ENCODE measurements at regions of chr11 and their contacts with region 1.

Region 1: GRCh38 chr11:20387241-20388095 is at the start of gene PRMT3:
- DNase-seq: peak; percentile 95
- H3K4me3 ChIP-seq: peak within 1 kb of the TSS; percentile 80 to 99 (median 95)
- H3K27ac ChIP-seq: peak within 1 kb of the TSS; percentile 89
- H3K4me1 ChIP-seq: peaks cover 11% of the 10 kb centered on the region
- H3K27me3 ChIP-seq: no peaks in the 10 kb centered on the region
- CTCF ChIP-seq: peak in 1 of 2 donors; percentile 99
- total RNA-seq, gene PRMT3: 23.3 to 26.3 TPM

Region 2: DNA sequence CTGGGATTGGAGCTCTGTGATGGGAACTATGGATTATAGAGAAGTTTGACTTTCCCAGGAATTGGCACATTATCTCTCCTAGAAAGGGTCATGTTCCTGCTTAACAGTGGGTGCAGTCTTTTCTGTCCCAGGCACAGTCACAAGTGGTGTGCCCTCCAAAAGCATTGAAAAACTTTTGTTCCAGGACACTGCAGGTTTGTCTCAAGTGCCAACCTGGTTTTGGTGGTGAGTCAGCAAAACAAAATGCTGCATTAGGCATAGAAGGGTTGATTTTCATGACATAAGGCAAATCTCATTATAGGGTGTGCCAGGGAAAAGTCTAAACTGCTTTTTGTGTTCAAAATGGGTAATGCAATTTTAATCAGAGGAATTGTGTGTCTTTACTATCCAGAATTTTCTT is 19.0 kb before region 1 on chr11:
- CTCF ChIA-PET with region 1: no interaction called
- dilution Hi-C with region 1: no loop called
- in situ Hi-C with region 1: no loop called
- intact Hi-C with region 1: loop called (anchors 1 kb)
- DNase-seq: peak; percentile 83
- H3K4me3 ChIP-seq: no peak overlapping the region
- H3K27ac ChIP-seq: peak overlapping the region; percentile 92
- H3K4me1 ChIP-seq: peaks cover 35% of the 10 kb centered on the region
- H3K27me3 ChIP-seq: no peaks in the 10 kb centered on the region
- CTCF ChIP-seq: no peak

Region 3: DNA sequence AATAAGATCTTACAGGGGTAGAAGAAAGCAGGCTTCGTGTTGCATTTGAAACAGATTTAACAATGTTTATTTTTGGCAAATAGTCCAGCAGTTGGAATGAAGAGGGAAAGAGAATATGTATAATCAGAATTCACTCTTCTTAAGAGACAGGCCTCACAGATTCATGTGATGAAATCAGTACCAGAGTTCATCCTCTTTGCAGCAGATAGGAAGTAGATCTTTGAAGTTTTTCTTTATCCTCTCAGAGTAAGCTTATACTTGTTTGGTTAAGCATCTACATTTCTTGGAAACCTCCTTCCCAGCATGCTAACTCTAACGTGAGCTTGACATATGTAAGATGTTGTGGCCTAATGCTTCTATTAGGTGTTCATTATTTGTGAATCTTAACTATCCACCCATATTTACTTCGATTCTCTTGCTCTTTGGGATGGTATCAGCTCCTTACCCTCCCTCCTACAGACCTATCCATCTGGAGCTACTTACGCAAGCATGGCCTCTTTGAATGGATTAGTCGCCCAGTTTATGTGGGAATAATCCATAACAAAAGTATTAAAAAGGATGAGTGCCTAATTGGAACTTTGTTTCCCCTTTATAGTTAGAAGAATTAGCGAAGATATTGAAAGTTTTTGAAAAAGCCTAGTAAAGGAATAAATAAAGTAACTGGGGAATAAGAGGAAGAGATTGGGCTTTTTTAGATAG is 80.2 kb after region 1 on chr11:
- CTCF ChIA-PET with region 1: no interaction called
- dilution Hi-C with region 1: no loop called
- in situ Hi-C with region 1: no loop called
- intact Hi-C with region 1: no loop called
- DNase-seq: no peak
- H3K4me3 ChIP-seq: no peak overlapping the region
- H3K27ac ChIP-seq: no peak overlapping the region
- H3K4me1 ChIP-seq: no peaks in the 10 kb centered on the region
- H3K27me3 ChIP-seq: no peaks in the 10 kb centered on the region
- CTCF ChIP-seq: no peak

Measured in mammary epithelial cell (primary cell).